ENCODE measurements at regions of chr9 and their contacts with region 1.

Region 1: DNA sequence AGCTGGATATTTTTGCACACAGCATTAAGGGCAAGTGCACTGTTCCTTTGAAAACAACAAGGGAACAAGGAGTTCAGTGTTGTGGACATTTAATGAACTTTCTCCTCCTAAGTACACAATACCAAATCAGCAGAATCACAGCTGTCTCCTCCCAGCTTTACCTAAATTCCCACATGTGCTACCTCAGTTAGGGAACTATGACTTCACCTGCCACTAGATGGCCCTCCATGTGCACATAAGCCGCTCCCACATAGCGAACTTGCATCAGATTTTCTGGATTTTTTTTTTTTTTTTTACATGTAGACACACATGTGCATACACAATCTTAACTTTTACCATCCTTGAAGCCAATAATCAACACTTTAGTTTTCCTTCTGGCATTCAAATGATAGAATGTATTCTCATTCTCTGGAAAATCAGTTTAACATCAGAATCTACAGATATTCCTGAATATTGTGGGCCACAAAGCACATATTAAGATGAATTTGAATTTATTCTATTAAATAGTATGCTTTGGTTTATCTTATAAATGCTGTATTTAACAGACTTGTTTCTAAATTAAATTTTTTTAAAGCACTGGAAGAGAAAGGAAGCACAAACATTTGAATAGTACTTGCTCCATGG is 123.6 kb downstream of the PALM2AKAP2 start:
- DNase-seq: peak; percentile 64
- CTCF ChIP-seq: peak; percentile 73

Region 2: GRCh38 chr9:109307380-109308240 is 596.0 kb before region 1 on chr9:
- CTCF ChIA-PET with region 1: no interaction called
- POLR2A ChIA-PET with region 1: no interaction called
- DNase-seq: no peak
- CTCF ChIP-seq: no peak

Region 3: DNA sequence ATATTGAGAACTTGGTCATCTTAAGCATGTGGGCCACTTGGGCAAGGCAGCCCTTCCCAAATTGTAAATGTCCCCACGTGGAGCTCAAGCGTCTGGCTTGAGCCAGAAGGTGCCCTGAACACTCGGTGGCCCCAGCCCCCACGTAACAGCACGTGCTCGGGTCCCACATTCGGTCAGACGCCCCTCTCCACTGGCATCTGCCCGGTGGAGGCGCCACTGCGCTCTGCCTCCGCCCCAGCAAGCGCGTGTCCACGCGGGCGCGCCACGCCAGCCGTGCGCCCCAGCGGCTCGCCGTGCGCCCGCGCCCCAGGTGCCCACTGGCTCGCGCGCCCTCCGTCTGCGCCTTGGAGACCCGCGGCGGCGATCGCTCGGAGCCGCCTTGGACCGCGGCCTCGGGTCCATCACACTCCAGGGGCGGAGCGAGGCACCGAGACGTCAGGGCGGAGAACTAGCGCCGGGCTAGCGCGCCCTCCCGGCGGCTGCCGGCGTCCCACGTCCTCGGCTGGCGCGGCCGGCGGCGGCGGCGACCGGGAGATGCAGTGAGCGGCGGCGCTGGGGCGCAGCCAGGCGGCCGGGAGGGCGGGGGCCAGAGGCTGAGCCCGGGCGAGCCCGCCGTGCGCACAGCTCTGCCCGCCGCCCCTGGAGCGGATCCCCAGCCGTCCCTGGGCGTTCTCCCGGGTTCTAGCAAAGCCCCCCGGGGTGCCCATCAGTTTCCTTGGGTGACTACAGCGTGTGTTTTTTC is 123.7 kb before region 1 on chr9 and contains the start of gene PALM2AKAP2:
- CTCF ChIA-PET with region 1: no interaction called
- POLR2A ChIA-PET with region 1: no interaction called
- DNase-seq: no peak
- CTCF ChIP-seq: no peak

Region 4: GRCh38 chr9:109893241-109893640 is 10.4 kb before region 1 on chr9:
- CTCF ChIA-PET with region 1: interaction called, 35 read pairs
- POLR2A ChIA-PET with region 1: no interaction called
- DNase-seq: no peak
- CTCF ChIP-seq: no peak

Region 5: DNA sequence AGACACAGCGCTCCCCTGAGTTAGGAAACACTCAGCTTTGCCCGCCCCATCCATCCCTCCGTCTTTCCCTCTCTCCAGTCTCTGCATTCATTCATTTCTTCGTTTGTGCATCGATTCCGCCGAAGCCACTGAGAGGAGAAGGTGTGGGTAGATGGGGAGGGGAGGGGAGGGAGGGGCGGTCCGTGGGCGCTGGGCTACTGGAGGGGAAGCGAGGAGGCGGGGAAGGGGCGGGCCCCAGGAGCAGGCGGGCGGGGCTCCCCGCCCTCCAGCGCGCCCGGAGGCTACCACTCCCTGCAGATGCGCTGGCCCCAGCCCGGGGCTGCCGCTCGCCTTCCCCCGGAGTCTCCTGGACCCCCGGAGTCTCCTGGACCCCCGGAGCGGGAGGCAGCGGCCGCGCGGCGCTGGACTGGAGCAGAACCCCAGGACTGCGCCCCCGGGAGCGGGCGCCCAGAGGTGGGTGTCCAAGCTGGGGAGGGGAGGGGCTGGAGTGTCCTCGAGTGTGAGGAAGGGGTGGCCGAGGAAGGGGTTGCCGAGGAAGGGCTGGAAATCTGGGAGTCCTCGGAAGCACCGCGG is 144.9 kb after region 1 on chr9:
- CTCF ChIA-PET with region 1: interaction called, 156 read pairs
- POLR2A ChIA-PET with region 1: no interaction called
- DNase-seq: peak; percentile 94
- CTCF ChIP-seq: no peak

Region 6: DNA sequence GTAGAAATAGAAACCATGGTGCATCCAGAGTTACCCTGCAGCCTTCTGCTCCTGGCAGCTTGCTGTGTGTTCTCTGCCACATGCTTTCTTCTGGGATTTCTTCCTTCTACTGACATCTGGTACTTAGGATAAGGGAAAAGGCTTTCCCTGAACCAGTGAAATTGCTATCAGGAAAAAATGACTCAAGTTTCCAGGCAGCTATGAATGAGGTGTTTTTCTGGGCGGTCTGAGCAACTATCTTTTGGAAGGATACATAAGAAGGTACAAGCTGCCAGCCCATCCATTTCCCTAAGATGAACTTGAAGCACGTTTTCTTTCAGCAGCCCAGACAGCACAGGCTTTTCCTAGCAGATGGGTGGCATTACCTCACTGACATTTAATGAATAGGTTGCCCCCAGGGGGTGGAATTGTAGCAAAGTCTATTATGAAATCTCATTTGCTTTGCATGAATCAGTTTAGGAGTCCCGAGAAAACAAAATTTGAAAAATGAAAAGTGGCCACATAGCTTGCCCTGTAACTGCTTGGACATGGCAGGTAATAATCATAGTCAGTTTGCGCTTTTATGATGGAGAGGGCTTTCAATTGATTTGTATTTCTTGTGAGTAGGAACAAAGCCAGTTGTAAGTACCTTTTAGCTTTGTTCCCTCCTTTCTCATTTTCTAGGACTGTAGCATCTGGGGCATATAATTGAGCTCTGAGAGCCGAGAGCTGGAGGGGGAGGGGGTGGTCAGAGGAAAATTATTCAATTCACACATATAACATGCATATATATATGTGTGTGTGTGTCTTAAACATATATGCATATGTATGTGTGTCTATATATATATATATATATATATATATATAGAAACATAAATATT is 195.8 kb after region 1 on chr9:
- CTCF ChIA-PET with region 1: interaction called, 11 read pairs
- POLR2A ChIA-PET with region 1: no interaction called
- DNase-seq: no peak
- CTCF ChIP-seq: no peak

Region 7: GRCh38 chr9:110143950-110144545 is 240.4 kb after region 1 on chr9:
- CTCF ChIA-PET with region 1: interaction called, 82 read pairs
- POLR2A ChIA-PET with region 1: interaction called, 4 read pairs
- DNase-seq: no peak
- CTCF ChIP-seq: no peak

Region 8: GRCh38 chr9:110217656-110218099 is 314.1 kb after region 1 on chr9:
- CTCF ChIA-PET with region 1: interaction called, 13 read pairs
- POLR2A ChIA-PET with region 1: no interaction called
- DNase-seq: peak; percentile 41
- CTCF ChIP-seq: peak; percentile 70

Region 9: DNA sequence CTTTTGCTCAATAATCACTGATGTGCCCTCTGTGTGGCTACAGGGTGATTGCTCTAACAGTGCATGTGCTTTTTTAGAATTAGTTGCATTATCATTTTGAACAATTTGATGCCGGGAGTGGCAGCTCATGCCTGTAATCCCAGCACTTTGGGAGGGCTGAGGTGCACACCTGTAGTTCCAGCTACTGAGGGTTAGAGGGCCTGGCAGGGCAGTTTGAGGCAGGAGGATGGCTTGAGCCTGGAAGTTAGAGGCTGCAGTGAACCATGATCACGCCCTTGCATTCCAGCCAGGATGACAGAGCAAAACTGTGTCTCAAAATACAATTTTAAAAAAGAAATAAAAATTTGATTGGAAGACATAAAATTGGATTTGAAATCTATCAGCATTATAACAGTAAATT is 325.3 kb after region 1 on chr9:
- CTCF ChIA-PET with region 1: no interaction called
- POLR2A ChIA-PET with region 1: no interaction called
- DNase-seq: no peak
- CTCF ChIP-seq: no peak

Region 10: DNA sequence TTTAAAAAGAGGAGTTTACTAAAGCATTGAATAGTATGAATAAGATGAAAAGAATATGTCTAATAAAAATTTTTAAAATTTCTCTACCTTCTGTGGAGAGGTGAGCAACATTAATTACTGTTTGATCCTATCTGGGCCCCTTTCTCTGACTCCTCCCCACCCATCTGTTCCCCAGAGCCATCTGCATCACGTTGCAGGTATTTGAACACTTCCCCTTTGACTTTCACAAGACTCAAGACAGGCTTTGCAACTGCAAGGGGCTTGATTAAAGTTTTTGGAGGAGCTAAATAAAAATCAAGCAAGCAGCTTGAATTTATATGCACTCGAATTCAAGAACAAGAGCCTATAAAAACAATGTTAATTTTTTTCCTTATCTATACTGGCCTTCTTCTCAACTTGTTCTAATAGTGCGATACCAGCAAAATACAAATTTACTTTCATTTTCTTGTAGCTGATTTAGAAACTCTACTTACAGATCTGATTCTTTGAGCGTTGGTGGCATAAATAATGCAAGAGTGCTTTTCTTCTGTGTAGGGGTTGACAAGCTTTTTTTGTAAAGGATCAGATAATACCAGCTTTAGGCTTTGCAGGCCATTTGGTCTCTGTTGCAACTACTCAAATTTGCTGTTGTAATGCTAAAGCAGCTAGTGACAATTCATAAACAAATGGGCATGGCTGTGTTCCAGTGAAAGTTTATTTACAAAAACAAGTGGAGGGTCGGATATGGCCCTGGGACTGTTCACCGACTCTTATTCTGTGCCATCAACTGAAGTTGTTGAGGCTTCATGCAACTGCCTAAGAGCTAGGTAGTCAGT is 412.8 kb after region 1 on chr9:
- CTCF ChIA-PET with region 1: no interaction called
- POLR2A ChIA-PET with region 1: no interaction called
- DNase-seq: peak; percentile 70
- CTCF ChIP-seq: no peak

Measured in GM10248 (cell line).